Uterus (tissue), 4 donors: ENCODE measurements at regions of chr10 and their contacts with region 1.

Region 1: DNA sequence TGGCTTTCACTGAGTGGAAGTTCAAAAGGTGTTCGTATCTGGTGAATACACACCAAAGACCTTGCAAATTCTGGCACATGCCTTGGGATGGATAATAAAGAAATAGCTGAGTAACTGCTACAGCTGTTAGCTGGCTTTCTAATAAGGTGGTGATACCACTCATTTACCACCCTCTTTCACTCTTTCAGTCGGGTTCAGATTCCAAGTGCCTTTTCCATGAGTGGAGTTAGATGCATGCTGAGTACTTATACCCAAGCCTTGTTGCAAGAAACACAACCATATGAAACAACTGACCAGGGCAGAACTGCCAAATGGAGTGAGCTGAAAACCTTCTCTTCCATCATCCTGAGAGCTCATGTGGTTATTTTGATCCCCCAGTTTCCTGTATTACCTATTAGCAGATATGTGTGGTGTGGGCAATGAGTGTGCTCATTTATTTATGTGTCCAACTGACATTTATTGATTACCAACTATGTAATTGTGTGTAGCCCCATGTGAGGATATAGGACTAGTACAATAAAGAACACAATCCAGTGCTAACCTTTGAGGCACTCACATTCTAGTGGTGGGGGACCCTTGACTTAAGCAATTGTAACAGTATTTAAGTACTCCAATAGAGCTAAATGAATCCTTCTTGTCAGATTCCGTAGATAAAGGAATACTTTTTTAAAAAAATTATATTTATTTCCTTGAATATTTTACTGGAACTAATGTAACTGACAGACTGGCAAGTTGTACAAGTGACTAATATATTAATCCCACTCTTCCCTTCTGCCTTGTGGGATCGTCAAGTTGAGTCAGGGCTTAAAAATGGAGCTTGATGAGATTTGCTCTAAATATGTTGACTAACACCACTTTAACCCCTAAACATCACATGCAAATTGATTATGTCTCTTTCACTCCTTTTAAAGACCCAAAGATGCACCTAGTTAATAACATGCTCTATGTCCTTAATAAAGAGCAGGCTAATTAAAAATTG is 124.7 kb downstream of the ARID5B start:
- DNase-seq: no peak
- H3K4me3 ChIP-seq: no peak overlapping the region
- H3K27ac ChIP-seq: no peak overlapping the region
- H3K4me1 ChIP-seq: peaks cover 0 to 4% of the 10 kb centered on the region in 2 donors
- H3K27me3 ChIP-seq: no peaks in the 10 kb centered on the region
- CTCF ChIP-seq: no peak
- POLR2A ChIP-seq: no peak

Region 2: DNA sequence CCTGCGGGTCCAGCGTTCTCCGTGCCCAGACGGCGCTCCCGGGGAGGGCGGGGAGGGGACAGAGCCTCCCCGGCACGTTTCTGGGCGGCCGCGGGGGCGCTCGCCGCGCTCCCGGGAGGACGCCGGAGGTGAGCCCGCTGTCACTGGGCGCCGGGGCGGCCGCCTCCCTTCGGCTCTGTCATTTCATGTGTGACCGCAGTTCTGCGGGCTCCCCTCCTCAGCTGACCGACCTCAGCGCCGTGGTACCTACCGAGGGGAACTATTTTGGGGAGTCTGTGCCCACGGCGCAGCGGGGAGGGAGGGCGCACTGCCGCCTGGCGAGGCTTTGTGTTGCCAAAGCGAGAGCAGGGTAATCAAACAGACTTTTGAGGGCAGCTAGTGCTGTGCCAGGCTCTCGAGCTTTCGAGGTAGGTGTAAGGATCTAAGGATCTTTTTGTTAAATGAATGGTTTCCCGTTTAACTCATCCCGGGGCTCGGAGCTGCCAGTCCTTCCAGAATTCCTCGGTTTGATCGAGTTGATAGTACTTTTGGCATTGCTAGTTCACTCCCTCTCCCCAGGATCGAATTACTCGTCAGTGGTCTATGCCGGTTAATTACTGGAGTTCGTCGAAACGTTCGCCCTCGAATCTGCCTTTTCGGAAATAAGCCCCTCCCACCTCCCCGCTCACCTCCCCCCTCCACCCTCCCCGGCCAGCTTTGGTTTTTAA is 122.8 kb before region 1 on chr10:
- intact Hi-C with region 1: loop called (anchors 10 kb)
- DNase-seq: peak; percentile 58 to 66
- H3K4me3 ChIP-seq: peak overlapping the region; percentile 75 to 83
- H3K27ac ChIP-seq: peak overlapping the region; percentile 98 to 100
- H3K4me1 ChIP-seq: peaks cover 0 to 4% of the 10 kb centered on the region in 2 donors
- H3K27me3 ChIP-seq: no peaks in the 10 kb centered on the region
- CTCF ChIP-seq: peak in 3 of 4 experiments; percentile 14 to 36 (median 30)
- POLR2A ChIP-seq: peak; percentile 17 to 51